ENCODE measurements at regions of chr10 and their contacts with region 1.

Region 1: DNA sequence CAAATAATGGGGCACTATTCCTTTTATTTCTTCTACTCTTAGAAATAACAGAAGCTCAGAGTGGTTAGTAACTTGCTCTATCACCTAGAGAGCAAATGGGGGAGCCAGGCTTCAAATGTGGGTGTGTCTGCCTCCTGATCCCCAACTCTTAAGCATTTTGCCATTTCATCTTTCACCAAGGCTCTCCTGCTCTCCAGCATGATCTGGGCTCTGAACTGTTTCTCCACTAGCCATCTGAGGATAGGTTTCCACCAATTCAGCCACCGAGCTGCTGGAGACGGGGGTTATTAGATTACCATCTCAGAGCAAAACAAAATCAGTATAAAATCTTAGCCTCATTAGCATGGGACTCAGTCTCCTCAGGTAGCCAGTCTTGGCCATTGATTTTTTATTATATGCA is 20.2 kb upstream of the VAX1 start:
- DNase-seq: no peak
- ATAC-seq: no peak
- H3K4me3 Mint-ChIP-seq: no peak overlapping the region
- H3K27ac Mint-ChIP-seq: no peak overlapping the region
- H3K4me1 Mint-ChIP-seq: peaks cover 49% of the 10 kb centered on the region
- H3K27me3 Mint-ChIP-seq: peaks cover 100% of the 10 kb centered on the region
- CTCF ChIP-seq: no peak

Region 2: DNA sequence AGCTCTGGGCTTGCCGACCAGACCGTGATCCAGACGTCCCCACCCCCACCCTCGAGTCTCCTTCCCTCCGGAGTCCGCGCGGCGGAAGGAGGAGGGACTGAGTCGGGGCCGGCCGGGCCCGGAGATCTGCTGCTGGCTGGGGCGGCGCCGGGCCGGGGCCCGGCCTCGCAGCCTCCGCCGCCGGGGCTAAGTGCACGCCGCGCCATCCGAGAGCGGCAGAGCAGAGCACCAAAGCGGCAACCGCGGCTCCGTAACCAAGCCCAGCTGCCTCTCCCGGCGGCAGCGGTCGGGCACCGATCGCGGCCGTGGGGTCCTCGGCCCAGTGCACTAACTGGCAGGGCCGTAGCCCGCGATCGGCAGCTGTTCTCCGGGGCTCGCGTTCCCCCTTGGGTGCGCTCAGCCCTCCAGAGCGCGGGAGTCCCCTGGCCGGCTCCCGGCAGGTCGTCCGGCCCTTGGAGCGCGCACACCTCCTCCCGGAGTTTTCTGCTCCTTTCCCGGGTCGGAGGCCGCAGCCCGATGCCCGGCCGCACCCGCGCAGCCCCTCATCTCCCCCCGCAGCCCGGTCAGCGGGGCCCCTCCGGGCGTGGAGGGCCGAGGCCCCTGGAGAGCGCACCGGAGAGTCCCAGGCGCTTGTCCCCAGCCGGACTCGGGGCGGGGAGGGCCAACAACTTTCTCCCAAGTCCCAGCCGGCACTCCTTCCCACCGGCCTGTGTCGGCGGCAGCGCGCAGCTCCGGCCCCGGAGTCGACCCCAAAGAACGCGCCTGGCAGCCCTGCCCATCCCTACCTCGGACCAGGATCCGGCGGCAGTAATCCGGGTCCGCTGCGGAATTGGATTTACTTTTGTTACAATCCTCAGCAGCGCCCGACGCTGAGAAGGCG is 21.0 kb before region 1 on chr10:
- CTCF ChIA-PET with region 1: interaction called, 18 read pairs
- POLR2A ChIA-PET with region 1: interaction called, 5 read pairs
- DNase-seq: peak; percentile 60
- ATAC-seq: peak; percentile 5
- H3K4me3 Mint-ChIP-seq: peak overlapping the region; percentile 67
- H3K27ac Mint-ChIP-seq: no peak overlapping the region
- H3K4me1 Mint-ChIP-seq: peaks cover 54% of the 10 kb centered on the region
- H3K27me3 Mint-ChIP-seq: peaks cover 96% of the 10 kb centered on the region
- CTCF ChIP-seq: no peak

Measured in WTC11 (cell line).